Panc1 (cell line): ENCODE measurements at regions of chr13 and their contacts with region 1.

Region 1: GRCh38 chr13:98653463-98653985 is 76.6 kb upstream of the STK24 start:
- DNase-seq: peak; percentile 59
- ATAC-seq: peak; percentile 94
- H3K4me3 ChIP-seq: no peak overlapping the region
- H3K27ac ChIP-seq: no peak overlapping the region
- H3K4me1 ChIP-seq: no peaks in the 10 kb centered on the region
- H3K27me3 ChIP-seq: no peaks in the 10 kb centered on the region
- CTCF ChIP-seq: peak; percentile 78

Region 2: GRCh38 chr13:98445340-98446233 is 207.9 kb before region 1 on chr13:
- CTCF ChIA-PET with region 1: no interaction called
- POLR2A ChIA-PET with region 1: no interaction called
- in situ Hi-C with region 1: no loop called
- intact Hi-C with region 1: loop called (anchors 5 kb)
- DNase-seq: no peak
- ATAC-seq: peak; percentile 78
- H3K4me3 ChIP-seq: no peak overlapping the region
- H3K27ac ChIP-seq: no peak overlapping the region
- H3K4me1 ChIP-seq: no peaks in the 10 kb centered on the region
- H3K27me3 ChIP-seq: no peaks in the 10 kb centered on the region
- CTCF ChIP-seq: peak; percentile 85

Region 3: GRCh38 chr13:98581971-98582680 is 71.4 kb before region 1 on chr13:
- CTCF ChIA-PET with region 1: no interaction called
- POLR2A ChIA-PET with region 1: no interaction called
- in situ Hi-C with region 1: no loop called
- intact Hi-C with region 1: loop called (anchors 10 kb)
- DNase-seq: no peak
- ATAC-seq: no peak
- H3K4me3 ChIP-seq: no peak overlapping the region
- H3K27ac ChIP-seq: no peak overlapping the region
- H3K4me1 ChIP-seq: peaks cover 9% of the 10 kb centered on the region; the same call in 1 of the 2 replicates
- H3K27me3 ChIP-seq: no peaks in the 10 kb centered on the region
- CTCF ChIP-seq: no peak

Region 4: DNA sequence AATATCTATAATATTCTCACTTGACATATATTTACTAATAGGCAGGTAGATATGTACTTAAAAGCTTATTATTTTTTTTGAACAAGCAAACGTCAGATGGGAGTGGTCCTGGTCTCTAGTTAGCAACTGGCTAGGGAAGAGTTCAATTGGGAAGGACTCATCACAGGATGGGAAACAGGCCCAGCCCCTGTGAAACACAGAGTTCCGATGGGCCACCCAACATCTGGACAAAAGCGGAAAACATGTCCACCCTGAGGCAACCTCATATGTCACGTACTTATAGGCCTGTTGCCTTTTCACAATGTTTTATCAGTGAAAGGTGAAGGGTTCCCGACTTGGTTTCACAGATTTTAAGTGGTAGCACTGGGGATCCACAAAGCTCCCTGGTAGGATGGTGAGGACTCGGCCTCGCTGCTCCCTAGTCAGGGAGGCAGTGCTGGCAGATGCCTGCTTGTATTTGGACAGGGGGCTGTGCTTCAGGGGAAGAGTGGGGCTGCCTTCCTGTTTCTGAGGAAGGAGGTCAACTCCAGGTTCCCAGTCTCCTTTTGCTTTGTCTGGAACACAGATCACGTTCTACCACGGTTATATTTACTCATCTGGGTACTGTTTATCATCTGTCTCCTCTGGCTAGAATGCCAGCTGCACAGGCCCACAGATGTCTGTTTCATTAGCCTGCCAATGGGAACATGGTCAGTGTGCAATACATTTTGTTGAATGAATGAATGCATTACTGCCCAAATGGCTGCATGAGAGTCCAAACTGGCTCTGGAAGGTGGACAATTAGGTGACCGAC is 148.3 kb after region 1 on chr13:
- CTCF ChIA-PET with region 1: no interaction called
- POLR2A ChIA-PET with region 1: no interaction called
- in situ Hi-C with region 1: no loop called
- intact Hi-C with region 1: no loop called
- DNase-seq: no peak
- ATAC-seq: no peak
- H3K4me3 ChIP-seq: no peak overlapping the region
- H3K27ac ChIP-seq: no peak overlapping the region
- H3K4me1 ChIP-seq: no peaks in the 10 kb centered on the region
- H3K27me3 ChIP-seq: no peaks in the 10 kb centered on the region
- CTCF ChIP-seq: no peak